ENCODE measurements at regions of chr12 and their contacts with region 1.

Region 1: DNA sequence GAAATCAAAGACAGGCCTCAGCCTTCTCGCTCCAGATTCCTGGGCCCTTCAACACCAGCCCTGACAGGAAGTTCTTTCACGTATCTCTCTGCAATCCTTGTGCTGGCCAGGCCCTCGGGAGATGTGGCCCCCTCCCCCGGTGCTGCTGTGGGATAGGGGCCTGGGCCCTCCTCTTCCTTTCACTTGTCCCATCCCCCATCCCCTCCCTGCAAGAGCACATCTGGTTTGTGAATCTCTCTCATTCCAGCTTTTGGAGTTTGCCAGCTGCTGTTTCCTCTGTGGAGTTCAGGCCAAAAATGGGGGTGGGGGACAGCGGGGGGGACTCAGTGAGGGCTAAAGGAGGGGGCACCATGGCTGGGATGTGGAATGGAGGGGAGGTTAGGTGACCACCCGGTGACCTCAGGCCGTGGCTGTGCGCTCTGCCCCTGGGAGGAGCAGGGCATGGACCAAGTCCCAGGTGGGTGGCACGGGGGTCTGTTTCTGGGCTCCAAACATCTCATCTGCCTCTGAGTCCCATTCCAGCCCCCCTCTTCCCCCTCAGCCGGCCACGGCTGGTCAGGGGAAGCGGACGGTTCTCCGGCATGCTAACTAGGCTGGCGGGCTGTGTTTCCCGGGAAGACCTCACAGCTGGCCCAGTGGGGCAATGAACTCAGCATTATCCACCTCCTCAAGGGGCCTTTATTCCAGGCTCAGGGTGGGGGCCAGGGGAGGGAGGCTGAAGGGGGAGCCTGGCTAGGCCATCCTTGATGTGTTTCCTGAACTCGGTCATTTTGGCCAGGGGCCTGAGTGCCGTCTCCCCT is 7.4 kb downstream of the LRP1 start:
- DNase-seq: no peak
- H3K4me3 ChIP-seq: peak overlapping the region; percentile 37
- H3K27ac ChIP-seq: peak overlapping the region; percentile 61
- H3K27me3 ChIP-seq: no peaks in the 10 kb centered on the region
- CTCF ChIP-seq: no peak

Region 2: DNA sequence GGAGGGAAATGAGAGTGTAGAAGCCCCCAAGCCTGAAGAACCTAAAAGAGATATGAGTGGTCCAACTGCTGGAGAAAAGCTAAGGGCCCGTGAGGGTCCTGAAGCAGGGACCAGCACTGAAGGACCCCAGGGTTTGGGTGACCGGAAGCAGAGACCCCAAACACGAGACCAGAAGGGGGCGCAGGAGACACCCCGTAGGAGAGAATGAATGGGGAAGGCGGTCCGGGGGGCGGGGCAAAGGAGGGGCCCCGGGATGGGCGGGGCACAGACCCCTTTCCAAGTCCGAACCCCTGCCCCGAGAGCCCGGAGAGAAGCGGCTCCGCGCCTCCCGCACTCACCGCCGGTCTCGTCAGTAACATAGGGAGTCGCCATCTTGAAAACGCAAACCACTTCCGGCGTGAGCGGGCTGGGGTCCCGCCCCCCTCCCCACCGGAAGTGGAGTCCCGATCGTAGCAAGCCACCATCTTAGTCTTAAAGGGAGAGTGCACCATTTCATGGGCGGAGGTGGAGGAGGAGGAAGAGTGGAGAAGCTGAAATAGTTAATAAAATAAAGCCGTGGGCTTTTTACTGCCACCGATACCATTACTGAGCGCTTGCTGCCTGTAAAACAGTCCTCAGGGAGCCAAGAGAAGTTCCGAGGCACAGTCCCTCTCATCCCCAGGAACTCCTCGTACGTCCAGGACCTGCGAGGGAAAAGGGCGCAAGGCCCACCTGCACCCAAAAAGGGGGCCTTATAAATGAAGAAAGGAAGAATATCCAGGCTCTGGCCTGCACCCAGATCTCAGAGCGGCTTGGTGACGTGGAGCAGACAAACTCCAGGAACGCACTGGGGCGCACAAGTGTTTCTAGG is 1208.8 kb before region 1 on chr12:
- CTCF ChIA-PET with region 1: no interaction called
- POLR2A ChIA-PET with region 1: no interaction called
- DNase-seq: peak; percentile 74
- H3K4me3 ChIP-seq: peak overlapping the region; percentile 97
- H3K27ac ChIP-seq: peak overlapping the region; percentile 93
- H3K27me3 ChIP-seq: no peaks in the 10 kb centered on the region
- CTCF ChIP-seq: peak; percentile 86

Region 3: DNA sequence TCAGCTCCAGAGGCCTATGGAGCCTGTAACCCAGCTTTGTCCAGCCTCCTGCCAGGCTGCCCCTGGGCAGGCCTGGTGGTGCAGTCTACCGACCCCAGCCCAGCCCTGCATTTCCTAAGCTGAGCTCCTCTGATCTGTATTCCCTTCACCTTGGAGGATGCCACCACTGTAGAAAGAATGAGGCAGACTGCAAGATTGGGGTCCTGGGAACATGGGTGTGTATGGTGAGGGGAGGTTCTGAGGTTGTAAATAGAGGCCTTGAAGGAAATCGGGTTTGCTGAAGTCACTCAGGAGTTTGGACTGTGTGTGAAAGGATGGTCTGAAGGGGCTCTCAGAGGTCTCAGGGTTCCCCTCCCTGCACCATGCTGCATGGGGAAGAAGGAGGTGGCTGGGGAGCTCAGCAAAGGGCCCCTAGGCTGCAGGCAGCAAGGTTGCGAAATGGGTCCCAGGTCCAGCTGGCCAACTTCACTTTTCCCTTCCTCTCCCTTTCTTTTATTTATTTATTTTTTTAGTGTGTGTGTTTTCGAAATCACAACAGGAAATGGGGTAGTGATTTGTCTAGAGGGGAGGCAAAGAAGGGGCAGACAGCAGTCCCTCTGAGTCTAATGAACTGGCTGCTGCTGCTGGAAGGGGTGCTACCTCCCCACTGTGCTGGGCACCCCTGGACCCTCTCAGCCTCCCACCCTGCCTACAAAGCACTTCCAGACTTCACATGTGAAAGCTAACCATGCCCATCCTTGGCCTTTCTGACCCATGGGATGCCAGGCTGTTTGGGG is 12.9 kb after region 1 on chr12:
- CTCF ChIA-PET with region 1: interaction called, 3 read pairs
- POLR2A ChIA-PET with region 1: interaction called, 12 read pairs
- DNase-seq: no peak
- H3K4me3 ChIP-seq: peak overlapping the region; percentile 29
- H3K27ac ChIP-seq: peak overlapping the region; percentile 93
- H3K27me3 ChIP-seq: no peaks in the 10 kb centered on the region
- CTCF ChIP-seq: no peak

Measured in AG04450 (cell line).